ENCODE measurements at regions of chr11 and their contacts with region 1.

Region 1: GRCh38 chr11:20518323-20518834 is 81.0 kb upstream of the SLC6A5 start:
- H3K4me3 ChIP-seq: no peak overlapping the region
- H3K27ac ChIP-seq: no peak overlapping the region
- H3K4me1 ChIP-seq: no peaks in the 10 kb centered on the region
- CTCF ChIP-seq: no peak

Region 2: GRCh38 chr11:20497124-20497792 is 21.1 kb before region 1 on chr11:
- CTCF ChIA-PET with region 1: interaction called, 4 read pairs
- POLR2A ChIA-PET with region 1: interaction called, 15 read pairs
- H3K4me3 ChIP-seq: no peak overlapping the region
- H3K27ac ChIP-seq: no peak overlapping the region
- H3K4me1 ChIP-seq: no peaks in the 10 kb centered on the region
- CTCF ChIP-seq: no peak